Activated CD4-positive, alpha-beta memory T cell treated with anti-CD3 and anti-CD28 coated beads for 36 hours (primary cell): ENCODE measurements at regions of chr3 and their contacts with region 1.

Region 1: GRCh38 chr3:192917404-192918274 is at the start of gene MB21D2:
- DNase-seq: peak; percentile 69
- H3K4me3 Mint-ChIP-seq: peak within 1 kb of the TSS; percentile 89
- H3K27ac Mint-ChIP-seq: peak within 1 kb of the TSS; percentile 91
- H3K4me1 Mint-ChIP-seq: peaks cover 43% of the 10 kb centered on the region
- H3K27me3 Mint-ChIP-seq: peaks cover 43% of the 10 kb centered on the region
- total RNA-seq, gene MB21D2: 8.7 to 9.1 TPM

Region 2: GRCh38 chr3:192831111-192831644 is 86.5 kb before region 1 on chr3:
- CTCF ChIA-PET with region 1: no interaction called
- POLR2A ChIA-PET with region 1: interaction called, 4 read pairs
- intact Hi-C with region 1: loop called (anchors 5 kb)
- DNase-seq: peak; percentile 64
- H3K4me3 Mint-ChIP-seq: no peak overlapping the region
- H3K27ac Mint-ChIP-seq: peak overlapping the region; percentile 24
- H3K4me1 Mint-ChIP-seq: peaks cover 39% of the 10 kb centered on the region
- H3K27me3 Mint-ChIP-seq: peaks cover 1% of the 10 kb centered on the region

Region 3: DNA sequence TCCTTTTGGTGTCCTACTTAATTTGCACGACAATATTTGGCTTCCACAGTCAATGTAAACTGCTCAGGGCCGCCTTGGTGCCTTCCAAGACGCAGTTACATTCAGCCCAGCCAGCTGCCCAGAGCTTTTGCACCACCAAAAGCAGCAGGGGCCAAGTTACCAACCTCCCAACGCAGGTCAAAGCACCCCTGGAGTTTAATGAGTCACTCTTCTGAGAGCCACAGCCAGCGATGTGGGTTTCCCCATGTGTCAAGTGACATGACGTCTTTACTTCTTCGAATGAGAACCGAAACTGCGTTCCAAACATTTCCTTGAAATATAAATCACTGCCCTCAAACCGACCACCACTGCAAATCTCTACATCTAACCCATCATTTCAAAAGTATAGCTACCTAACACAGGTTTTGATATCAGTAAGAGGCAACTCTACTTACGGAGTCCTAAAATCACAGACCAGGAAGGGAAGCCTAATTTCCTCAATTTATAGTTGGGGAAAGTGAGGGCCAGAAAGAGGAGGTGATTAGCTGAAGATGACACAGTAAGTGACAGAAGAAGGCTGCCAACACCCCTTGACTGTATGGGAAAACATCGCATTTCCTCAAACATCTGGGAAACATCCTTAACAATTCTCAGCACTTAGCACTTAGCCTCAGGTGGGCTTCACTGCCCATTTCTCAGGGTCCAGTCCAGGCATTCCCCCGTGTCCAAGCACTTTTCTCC is 24.5 kb before region 1 on chr3:
- CTCF ChIA-PET with region 1: interaction called, 6 read pairs
- POLR2A ChIA-PET with region 1: interaction called, 14 read pairs
- intact Hi-C with region 1: loop called (anchors 1 kb)
- DNase-seq: peak; percentile 86
- H3K4me3 Mint-ChIP-seq: peak overlapping the region; percentile 24
- H3K27ac Mint-ChIP-seq: peak overlapping the region; percentile 80
- H3K4me1 Mint-ChIP-seq: peaks cover 82% of the 10 kb centered on the region
- H3K27me3 Mint-ChIP-seq: peaks cover 12% of the 10 kb centered on the region

Region 4: GRCh38 chr3:192906949-192907348 is 10.7 kb before region 1 on chr3:
- CTCF ChIA-PET with region 1: interaction called, 5 read pairs
- POLR2A ChIA-PET with region 1: interaction called, 6 read pairs
- intact Hi-C with region 1: loop called (anchors 1 kb)
- DNase-seq: no peak
- H3K4me3 Mint-ChIP-seq: no peak overlapping the region
- H3K27ac Mint-ChIP-seq: no peak overlapping the region
- H3K4me1 Mint-ChIP-seq: peaks cover 37% of the 10 kb centered on the region
- H3K27me3 Mint-ChIP-seq: peaks cover 2% of the 10 kb centered on the region

Region 5: DNA sequence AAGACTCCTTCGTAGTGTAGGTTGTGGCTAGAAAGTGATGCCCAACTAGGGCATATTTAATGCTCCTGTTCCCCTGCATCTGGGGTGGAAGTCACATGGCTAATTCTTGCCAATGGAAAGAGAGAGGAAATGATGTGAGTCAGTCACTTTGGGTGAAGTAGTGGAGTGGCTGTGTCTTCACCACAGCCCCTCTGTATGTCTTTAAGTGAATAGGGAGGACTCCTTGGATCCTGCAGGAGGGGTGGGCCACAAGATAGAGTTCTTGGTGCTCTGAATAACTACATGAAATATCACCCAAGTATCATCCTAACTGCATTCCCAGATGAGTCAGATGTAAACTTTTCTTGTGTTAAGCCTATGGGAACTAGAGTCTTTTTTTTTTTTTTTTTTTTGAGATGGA is 17.8 kb after region 1 on chr3:
- CTCF ChIA-PET with region 1: no interaction called
- POLR2A ChIA-PET with region 1: no interaction called
- intact Hi-C with region 1: no loop called
- DNase-seq: no peak
- H3K4me3 Mint-ChIP-seq: no peak overlapping the region
- H3K27ac Mint-ChIP-seq: no peak overlapping the region
- H3K4me1 Mint-ChIP-seq: peaks cover 3% of the 10 kb centered on the region
- H3K27me3 Mint-ChIP-seq: peaks cover 1% of the 10 kb centered on the region

Region 6: GRCh38 chr3:192986379-192986778 is 68.7 kb after region 1 on chr3:
- CTCF ChIA-PET with region 1: no interaction called
- POLR2A ChIA-PET with region 1: no interaction called
- intact Hi-C with region 1: no loop called
- DNase-seq: no peak
- H3K4me3 Mint-ChIP-seq: no peak overlapping the region
- H3K27ac Mint-ChIP-seq: no peak overlapping the region
- H3K4me1 Mint-ChIP-seq: no peaks in the 10 kb centered on the region
- H3K27me3 Mint-ChIP-seq: no peaks in the 10 kb centered on the region

Region 7: DNA sequence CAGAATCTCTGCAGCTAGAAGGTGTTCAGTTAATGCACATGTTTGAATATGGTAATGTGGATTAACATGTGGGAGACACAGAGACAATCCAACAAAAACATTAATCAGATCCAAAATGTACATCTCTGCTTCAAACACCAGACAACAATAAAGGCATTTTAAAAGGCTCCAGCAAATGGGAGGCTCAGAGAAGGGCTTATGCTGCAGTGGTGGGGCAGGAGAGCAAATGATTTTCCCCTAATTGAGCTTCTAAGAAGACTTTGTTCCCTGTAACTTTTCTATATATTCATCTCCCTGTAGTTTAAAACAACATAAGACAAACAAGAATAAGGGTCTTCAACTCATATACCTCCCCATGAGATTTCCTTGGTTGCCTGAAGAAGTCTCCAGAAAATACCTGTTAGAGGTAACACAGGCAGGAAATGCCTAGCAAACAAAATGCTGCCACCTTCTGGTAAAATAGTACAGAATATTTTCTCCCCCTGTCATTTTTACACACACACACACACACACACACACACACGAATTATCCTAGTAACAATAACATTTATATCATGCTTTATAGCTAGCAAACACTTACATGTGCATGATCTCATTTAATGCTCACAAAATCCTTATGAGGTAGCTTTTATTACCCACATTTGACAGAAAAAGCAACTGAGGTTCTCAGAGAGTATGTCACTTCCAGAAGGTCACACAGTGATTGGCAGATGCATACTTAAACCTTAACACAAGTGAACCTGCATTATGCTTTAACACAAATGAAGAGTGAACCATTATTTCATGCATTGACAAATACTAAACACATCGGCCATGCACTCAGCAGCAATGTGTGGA is 123.4 kb after region 1 on chr3:
- CTCF ChIA-PET with region 1: interaction called, 15 read pairs
- POLR2A ChIA-PET with region 1: no interaction called
- intact Hi-C with region 1: loop called (anchors 2 kb)
- DNase-seq: no peak
- H3K4me3 Mint-ChIP-seq: no peak overlapping the region
- H3K27ac Mint-ChIP-seq: no peak overlapping the region
- H3K4me1 Mint-ChIP-seq: no peaks in the 10 kb centered on the region
- H3K27me3 Mint-ChIP-seq: no peaks in the 10 kb centered on the region

Region 8: DNA sequence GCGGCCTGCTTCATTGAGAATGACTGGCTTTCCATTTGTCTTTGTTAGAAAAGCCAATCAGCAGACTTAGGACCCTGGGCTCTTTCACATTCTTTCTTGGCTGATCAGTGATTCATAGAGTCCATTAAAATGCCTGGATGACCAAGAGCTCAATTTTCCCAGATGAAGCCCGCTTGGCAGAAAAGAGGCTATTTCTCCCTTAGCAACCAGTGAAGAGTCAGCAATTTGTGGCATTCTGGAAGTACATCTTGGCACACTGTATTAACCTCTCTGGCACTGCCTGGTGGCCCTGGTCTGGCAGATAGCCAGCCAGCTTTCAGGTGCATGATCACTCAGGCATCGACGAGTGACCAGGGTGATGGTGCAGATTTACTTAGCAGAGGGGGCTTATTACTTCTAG is 177.7 kb after region 1 on chr3:
- CTCF ChIA-PET with region 1: no interaction called
- POLR2A ChIA-PET with region 1: no interaction called
- intact Hi-C with region 1: no loop called
- DNase-seq: no peak
- H3K4me3 Mint-ChIP-seq: no peak overlapping the region
- H3K27ac Mint-ChIP-seq: no peak overlapping the region
- H3K4me1 Mint-ChIP-seq: no peaks in the 10 kb centered on the region
- H3K27me3 Mint-ChIP-seq: no peaks in the 10 kb centered on the region